ENCODE measurements at regions of chr7 and their contacts with region 1.

Region 1: GRCh38 chr7:16564909-16565426 is 38.3 kb downstream of the LRRC72 start:
- DNase-seq: peak; percentile 1
- H3K4me3 ChIP-seq: no peak overlapping the region
- H3K27me3 ChIP-seq: no peaks in the 10 kb centered on the region
- CTCF ChIP-seq: peak; percentile 70

Region 2: GRCh38 chr7:16078076-16078952 is 486.7 kb before region 1 on chr7:
- CTCF ChIA-PET with region 1: interaction called, 47 read pairs
- POLR2A ChIA-PET with region 1: no interaction called
- DNase-seq: no peak
- H3K4me3 ChIP-seq: no peak overlapping the region
- H3K27me3 ChIP-seq: no peaks in the 10 kb centered on the region
- CTCF ChIP-seq: peak; percentile 68

Region 3: DNA sequence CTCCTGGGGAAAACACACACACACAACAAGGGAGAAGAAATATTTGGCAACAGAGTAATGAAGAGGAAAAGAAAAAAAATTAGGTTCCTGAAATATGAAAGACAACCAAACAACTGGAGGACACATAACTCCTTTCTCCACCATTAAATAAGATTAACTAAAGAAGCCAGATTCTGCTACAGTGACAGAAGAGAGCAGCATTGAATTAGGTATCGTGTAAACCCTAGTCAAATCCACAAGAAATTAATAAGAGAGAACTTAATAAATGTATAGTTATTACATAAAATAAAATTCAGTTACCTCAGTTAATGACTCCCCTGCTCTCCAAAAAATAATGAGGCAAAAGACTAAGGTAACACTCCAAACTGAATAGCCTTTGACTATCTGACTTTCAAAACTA is 450.3 kb before region 1 on chr7:
- CTCF ChIA-PET with region 1: interaction called, 15 read pairs
- POLR2A ChIA-PET with region 1: interaction called, 12 read pairs
- DNase-seq: no peak
- H3K4me3 ChIP-seq: no peak overlapping the region
- H3K27me3 ChIP-seq: no peaks in the 10 kb centered on the region
- CTCF ChIP-seq: peak; percentile 45

Region 4: DNA sequence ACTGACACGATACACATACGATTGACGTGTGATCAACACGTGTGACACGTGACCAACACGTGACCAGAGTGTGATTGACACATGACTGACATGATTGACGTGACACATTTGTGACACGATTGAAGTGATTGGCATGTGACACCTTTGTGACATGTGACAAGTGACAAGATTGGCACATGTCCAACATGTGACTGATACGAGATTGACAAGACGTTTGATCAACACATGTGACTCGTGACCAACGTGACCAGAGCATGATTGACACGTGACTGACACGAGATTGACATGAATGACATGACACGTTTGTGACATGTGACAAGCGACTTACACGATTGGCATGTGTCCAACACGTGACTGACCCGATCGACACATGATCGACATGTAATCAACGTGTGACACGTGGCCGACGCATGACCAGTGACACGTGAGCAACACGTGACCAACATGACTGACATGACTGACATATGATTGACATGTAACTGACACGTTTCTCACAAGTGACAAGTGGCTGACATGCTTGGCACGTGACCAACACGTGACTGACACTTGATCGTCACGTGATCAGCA is 165.6 kb before region 1 on chr7:
- CTCF ChIA-PET with region 1: no interaction called
- POLR2A ChIA-PET with region 1: no interaction called
- DNase-seq: no peak
- H3K4me3 ChIP-seq: no peak overlapping the region
- H3K27me3 ChIP-seq: no peaks in the 10 kb centered on the region
- CTCF ChIP-seq: no peak

Region 5: DNA sequence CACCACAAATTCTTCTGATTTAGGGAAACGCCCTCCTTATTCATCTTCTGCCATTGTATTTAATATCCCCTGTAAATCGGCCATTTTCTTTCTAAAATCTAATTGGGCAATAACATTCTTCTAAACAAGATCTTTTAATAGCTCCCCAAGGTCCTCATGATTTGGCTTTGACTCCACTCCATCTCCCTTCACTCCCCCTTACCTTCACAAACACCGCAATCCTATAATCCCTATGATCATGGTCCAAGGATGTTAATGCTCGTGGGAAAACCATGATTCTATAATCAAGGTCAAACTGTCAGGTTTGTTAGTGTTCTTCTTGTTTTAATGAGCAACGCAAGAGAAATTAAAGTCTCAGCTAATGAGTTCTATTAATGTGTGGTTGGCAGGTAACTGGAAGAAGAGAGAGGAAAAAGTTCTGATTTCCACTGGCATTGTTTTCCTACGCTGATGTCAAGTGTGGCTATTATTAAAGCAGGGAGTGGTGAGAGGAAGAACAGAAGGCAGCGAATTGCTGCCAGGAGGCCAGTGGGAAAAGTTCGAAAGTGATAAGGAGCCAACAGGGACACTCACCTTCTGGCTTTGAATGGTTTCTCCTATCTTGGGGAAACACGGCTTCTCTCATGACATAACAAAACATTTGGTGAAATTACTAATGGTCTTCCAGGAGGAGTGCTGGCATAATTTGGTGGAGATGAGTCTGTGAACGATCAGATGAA is 10.3 kb before region 1 on chr7:
- CTCF ChIA-PET with region 1: interaction called, 19 read pairs
- POLR2A ChIA-PET with region 1: no interaction called
- DNase-seq: no peak
- H3K4me3 ChIP-seq: no peak overlapping the region
- H3K27me3 ChIP-seq: no peaks in the 10 kb centered on the region
- CTCF ChIP-seq: no peak

Region 6: DNA sequence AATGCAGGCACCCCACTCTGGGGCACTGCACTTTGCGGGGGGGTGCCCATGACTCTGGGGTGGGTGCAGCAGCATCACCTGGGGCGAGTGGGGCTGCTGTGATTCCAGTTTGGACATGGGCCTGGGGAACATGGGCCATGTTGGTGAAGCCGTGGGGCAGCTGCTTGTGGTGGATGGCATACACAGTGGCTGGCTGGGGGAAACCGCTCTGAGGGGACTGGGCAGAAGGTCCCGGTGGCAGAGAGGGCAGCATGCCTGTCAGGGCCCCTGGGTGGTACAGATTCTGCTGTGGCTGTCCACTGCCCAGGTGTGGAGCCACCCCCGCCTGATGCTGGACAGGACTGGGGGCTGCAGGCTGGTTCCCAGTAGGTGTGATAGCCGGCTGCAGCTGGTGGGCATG is 18.9 kb after region 1 on chr7:
- CTCF ChIA-PET with region 1: interaction called, 11 read pairs
- POLR2A ChIA-PET with region 1: no interaction called
- DNase-seq: no peak
- H3K4me3 ChIP-seq: no peak overlapping the region
- H3K27me3 ChIP-seq: no peaks in the 10 kb centered on the region
- CTCF ChIP-seq: no peak

Measured in BJ (cell line).